Dorsolateral prefrontal cortex (tissue), 120 donors: ENCODE measurements at regions of chr10 and their contacts with region 1.

Region 1: DNA sequence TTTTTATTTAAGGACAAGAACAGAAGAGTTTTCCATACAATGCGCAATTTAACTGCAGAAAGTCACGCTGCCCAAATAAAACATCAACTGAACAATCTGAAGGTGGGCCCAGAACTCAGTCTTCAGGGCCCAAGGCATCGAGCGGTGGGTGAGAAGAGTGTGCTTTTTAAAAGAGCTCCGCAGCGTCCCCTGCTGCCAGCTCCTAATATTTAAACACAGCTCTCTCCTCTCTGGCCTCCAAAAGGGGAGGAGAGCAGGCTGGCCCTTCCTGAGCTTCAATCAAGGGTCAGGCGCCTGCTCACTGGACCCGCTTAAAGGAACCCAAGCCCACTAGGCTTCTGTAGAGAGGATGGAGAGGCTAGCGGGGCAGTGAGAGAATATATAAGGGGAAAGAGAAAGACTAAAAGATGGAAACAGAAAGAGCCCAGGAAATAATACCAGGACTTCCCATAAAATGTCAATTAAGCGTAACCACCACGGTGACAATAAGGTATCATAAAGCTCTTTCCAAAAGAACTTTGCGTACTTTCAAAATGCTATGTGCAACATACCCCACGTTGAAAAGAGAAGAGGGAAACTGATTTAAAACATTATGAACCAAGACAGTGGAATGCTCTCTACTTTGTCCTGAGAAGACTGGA is 2.8 kb downstream of the FAM53B start:
- DNase-seq: peak; percentile 79 to 94 (median 90)
- H3K4me3 ChIP-seq: peak overlapping the region in 58 of 59 donors; percentile 62 to 90 (median 79)
- H3K27ac ChIP-seq: peak overlapping the region; percentile 87 to 100 (median 95)
- H3K27me3 ChIP-seq: no peaks in the 10 kb centered on the region
- CTCF ChIP-seq: peak; percentile 71 to 98 (median 91)

Region 2: DNA sequence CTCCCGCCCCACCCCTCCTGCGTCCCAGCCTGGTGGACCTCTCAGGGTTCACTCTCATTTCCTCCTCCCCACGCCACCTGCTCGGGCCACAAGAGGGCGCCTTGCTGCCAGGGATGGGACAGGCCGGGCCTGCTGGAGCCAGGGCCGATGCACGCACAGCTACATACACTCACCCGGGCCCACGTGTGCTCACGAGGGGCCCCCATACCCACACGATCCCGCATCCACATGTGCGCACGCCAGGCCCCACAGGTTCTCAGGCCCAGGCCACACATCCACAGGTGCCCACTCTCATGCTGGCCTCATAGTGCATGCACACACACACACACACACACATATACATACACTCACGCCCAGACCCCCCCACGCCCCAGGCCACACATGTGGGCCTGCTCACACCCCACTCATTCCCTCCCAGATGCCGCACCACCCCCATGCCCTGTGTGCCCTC is 211.2 kb before region 1 on chr10:
- intact Hi-C with region 1: loop called in 1 of 2 experiments (anchors 2 kb)
- DNase-seq: peak; percentile 85 to 92 (median 89)
- H3K4me3 ChIP-seq: peak overlapping the region in 9 of 59 donors; percentile 5 to 39 (median 28)
- H3K27ac ChIP-seq: peak overlapping the region in 14 of 59 donors; percentile 7 to 71 (median 42)
- H3K27me3 ChIP-seq: no peaks in the 10 kb centered on the region
- CTCF ChIP-seq: peak; percentile 23 to 95 (median 86)

Region 3: GRCh38 chr10:124601431-124602120 is 139.8 kb before region 1 on chr10:
- intact Hi-C with region 1: loop called in 1 of 2 experiments (anchors 5 kb)
- DNase-seq: peak in 1 of 10 donors; percentile 27
- H3K4me3 ChIP-seq: no peak overlapping the region
- H3K27ac ChIP-seq: peak overlapping the region in 6 of 59 donors; percentile 31 to 100 (median 99)
- H3K27me3 ChIP-seq: no peaks in the 10 kb centered on the region
- CTCF ChIP-seq: no peak

Region 4: DNA sequence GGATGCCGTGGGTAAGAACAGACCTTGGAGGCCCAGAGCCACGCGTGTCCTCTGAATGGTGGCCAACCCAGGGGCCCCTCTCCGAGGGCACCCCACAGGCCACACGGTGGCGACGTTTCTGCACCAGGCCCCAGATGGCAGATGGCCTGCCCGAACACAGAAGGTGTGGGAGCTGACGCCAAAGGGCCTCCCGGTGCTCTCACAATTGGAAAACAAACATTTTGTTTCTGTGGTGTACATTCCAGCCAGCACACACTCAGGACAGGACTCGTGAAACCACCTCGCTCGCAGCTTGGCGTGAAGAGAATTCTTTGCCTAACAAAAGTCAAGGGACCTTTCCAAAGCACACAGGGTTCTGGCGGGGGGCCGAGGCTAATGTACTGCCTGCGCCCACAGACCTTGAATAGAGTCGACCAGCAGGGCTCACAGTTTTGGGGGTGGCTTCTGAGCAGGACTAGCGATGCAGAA is 109.3 kb before region 1 on chr10:
- intact Hi-C with region 1: loop called in 1 of 2 experiments (anchors 1 kb)
- DNase-seq: peak in 2 of 10 donors; percentile 57 to 84
- H3K4me3 ChIP-seq: peak overlapping the region in 1 of 59 donors; percentile 29
- H3K27ac ChIP-seq: peak overlapping the region; percentile 12 to 98 (median 89)
- H3K27me3 ChIP-seq: no peaks in the 10 kb centered on the region
- CTCF ChIP-seq: peak in 54 of 56 donors; percentile 19 to 74 (median 53)

Region 5: GRCh38 chr10:124671486-124672075 is 69.8 kb before region 1 on chr10:
- intact Hi-C with region 1: loop called (anchors 1 to 5 kb)
- DNase-seq: peak in 9 of 10 donors; percentile 66 to 93 (median 88)
- H3K4me3 ChIP-seq: peak overlapping the region in 10 of 59 donors; percentile 0 to 30 (median 6)
- H3K27ac ChIP-seq: peak overlapping the region; percentile 71 to 100 (median 98)
- H3K27me3 ChIP-seq: no peaks in the 10 kb centered on the region
- CTCF ChIP-seq: peak in 53 of 56 donors; percentile 10 to 72 (median 51)

Region 6: DNA sequence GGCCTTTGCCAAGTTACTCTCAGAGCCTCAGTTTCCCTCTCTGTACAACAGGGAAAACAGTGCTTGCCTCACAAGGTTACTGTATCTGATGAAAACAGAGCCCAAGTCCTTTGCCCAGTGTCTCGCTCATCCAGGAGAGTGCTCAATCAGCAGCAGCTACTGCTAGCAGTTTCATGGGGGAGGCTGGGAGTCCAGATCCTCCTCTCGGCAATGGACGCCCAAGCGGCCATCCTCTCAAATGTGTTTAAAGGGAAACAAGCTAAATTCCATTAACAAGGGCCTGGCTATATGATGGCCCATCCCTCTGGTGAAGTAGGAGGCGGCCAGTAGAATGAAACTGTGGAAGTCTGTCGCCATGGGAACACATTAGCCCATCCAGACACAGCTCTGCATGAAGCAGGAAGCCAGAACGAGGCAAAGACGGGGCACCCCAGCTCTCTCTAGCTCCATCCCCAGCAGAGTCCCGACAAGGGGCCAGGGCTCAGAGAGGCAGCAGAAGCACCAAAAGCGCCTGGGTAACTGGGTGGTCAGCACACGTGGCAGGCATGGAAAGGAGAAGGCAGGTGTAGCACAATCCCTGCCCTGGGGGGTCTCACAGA is 32.4 kb before region 1 on chr10:
- intact Hi-C with region 1: loop called (anchors 2 to 5 kb)
- DNase-seq: peak in 1 of 10 donors; percentile 61
- H3K4me3 ChIP-seq: peak overlapping the region in 11 of 59 donors; percentile 4 to 33 (median 20)
- H3K27ac ChIP-seq: peak overlapping the region; percentile 72 to 100 (median 97)
- H3K27me3 ChIP-seq: no peaks in the 10 kb centered on the region
- CTCF ChIP-seq: no peak

Region 7: GRCh38 chr10:124791378-124792348 is 50.3 kb after region 1 on chr10 and contains the start of gene EEF1AKMT2:
- intact Hi-C with region 1: loop called in 1 of 2 experiments (anchors 5 kb)
- DNase-seq: peak; percentile 62 to 88 (median 80)
- H3K4me3 ChIP-seq: peak within 1 kb of the TSS; percentile 61 to 100 (median 93)
- H3K27ac ChIP-seq: peak within 1 kb of the TSS; percentile 48 to 95 (median 86)
- H3K27me3 ChIP-seq: no peaks in the 10 kb centered on the region
- CTCF ChIP-seq: peak in 54 of 56 donors; percentile 10 to 81 (median 56)
- total RNA-seq, gene EEF1AKMT2: 17.5 to 38.9 (median 26.4) TPM